ENCODE measurements at regions of chrX and their contacts with region 1.

Region 1: GRCh38 chrX:122666601-122667000 is 517.5 kb upstream of the GRIA3 start:
- DNase-seq: no peak
- H3K4me3 ChIP-seq: no peak overlapping the region
- H3K27ac ChIP-seq: no peak overlapping the region
- H3K4me1 ChIP-seq: no peaks in the 10 kb centered on the region
- H3K27me3 ChIP-seq: no peaks in the 10 kb centered on the region
- CTCF ChIP-seq: no peak
- POLR2A ChIP-seq: no peak

Region 2: DNA sequence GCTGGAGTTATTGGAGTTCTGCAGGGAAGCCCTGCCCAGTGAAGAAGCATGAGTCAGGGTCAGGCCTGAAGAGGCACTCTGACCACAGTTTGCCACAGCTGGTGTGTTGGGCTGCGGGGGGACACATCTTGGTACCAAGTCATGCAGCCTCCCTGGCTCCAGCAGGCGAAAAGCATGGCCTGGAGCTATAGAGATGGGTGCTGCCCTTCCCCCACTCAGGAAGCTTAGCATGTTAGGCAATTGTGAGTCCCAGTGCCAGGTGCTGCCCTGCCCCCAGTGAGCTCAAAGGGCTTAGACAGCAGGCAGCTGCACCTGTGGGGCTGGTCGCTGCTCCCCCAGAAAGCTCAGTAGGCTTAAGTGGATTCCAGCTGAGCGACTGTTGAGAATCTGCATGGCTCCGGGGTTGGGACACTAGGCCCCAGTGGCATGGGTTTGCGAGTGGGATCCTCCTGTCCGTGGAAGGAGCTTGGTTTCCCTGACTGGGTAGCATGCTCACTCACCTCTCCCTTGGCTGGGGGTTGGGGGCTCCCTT is 863.7 kb before region 1 on chrX:
- intact Hi-C with region 1: loop called (anchors 10 kb)
- DNase-seq: no peak
- H3K4me3 ChIP-seq: no peak overlapping the region
- H3K27ac ChIP-seq: no peak overlapping the region
- H3K4me1 ChIP-seq: no peaks in the 10 kb centered on the region
- H3K27me3 ChIP-seq: no peaks in the 10 kb centered on the region
- CTCF ChIP-seq: no peak
- POLR2A ChIP-seq: no peak

Region 3: GRCh38 chrX:122641826-122642225 is 24.8 kb before region 1 on chrX:
- intact Hi-C with region 1: no loop called
- DNase-seq: no peak
- H3K4me3 ChIP-seq: no peak overlapping the region
- H3K27ac ChIP-seq: no peak overlapping the region
- H3K4me1 ChIP-seq: no peaks in the 10 kb centered on the region
- H3K27me3 ChIP-seq: no peaks in the 10 kb centered on the region
- CTCF ChIP-seq: no peak
- POLR2A ChIP-seq: no peak